Caco-2 (cell line): ENCODE measurements at regions of chr9 and their contacts with region 1.

Region 1: GRCh38 chr9:124852829-124853531 is at the start of gene WDR38:
- DNase-seq: peak; percentile 83 to 85
- H3K4me3 ChIP-seq: peak within 1 kb of the TSS; percentile 47
- H3K4me3 Mint-ChIP-seq: peak within 1 kb of the TSS; percentile 75
- H3K27ac Mint-ChIP-seq: peak within 1 kb of the TSS; percentile 76
- H3K4me1 ChIP-seq: peaks cover 7% of the 10 kb centered on the region; the same call in 1 of the 2 replicates
- H3K4me1 Mint-ChIP-seq: peaks cover 6% of the 10 kb centered on the region
- H3K27me3 ChIP-seq: no peaks in the 10 kb centered on the region
- H3K27me3 Mint-ChIP-seq: no peaks in the 10 kb centered on the region
- CTCF ChIP-seq: peak; percentile 78 to 99
- total RNA-seq, gene WDR38: not detected in 2 replicates

Region 2: GRCh38 chr9:124708633-124709291 is 144.2 kb before region 1 on chr9:
- CTCF ChIA-PET with region 1: interaction called, 5 read pairs
- POLR2A ChIA-PET with region 1: no interaction called
- intact Hi-C with region 1: loop called (anchors 1 kb)
- DNase-seq: peak in 1 of 2 experiments; percentile 48
- H3K4me3 ChIP-seq: no peak overlapping the region
- H3K4me3 Mint-ChIP-seq: no peak overlapping the region
- H3K27ac Mint-ChIP-seq: no peak overlapping the region
- H3K4me1 ChIP-seq: peaks cover 14% of the 10 kb centered on the region; the same call in 1 of the 2 replicates
- H3K4me1 Mint-ChIP-seq: peaks cover 41% of the 10 kb centered on the region
- H3K27me3 ChIP-seq: no peaks in the 10 kb centered on the region
- H3K27me3 Mint-ChIP-seq: no peaks in the 10 kb centered on the region
- CTCF ChIP-seq: no peak

Region 3: DNA sequence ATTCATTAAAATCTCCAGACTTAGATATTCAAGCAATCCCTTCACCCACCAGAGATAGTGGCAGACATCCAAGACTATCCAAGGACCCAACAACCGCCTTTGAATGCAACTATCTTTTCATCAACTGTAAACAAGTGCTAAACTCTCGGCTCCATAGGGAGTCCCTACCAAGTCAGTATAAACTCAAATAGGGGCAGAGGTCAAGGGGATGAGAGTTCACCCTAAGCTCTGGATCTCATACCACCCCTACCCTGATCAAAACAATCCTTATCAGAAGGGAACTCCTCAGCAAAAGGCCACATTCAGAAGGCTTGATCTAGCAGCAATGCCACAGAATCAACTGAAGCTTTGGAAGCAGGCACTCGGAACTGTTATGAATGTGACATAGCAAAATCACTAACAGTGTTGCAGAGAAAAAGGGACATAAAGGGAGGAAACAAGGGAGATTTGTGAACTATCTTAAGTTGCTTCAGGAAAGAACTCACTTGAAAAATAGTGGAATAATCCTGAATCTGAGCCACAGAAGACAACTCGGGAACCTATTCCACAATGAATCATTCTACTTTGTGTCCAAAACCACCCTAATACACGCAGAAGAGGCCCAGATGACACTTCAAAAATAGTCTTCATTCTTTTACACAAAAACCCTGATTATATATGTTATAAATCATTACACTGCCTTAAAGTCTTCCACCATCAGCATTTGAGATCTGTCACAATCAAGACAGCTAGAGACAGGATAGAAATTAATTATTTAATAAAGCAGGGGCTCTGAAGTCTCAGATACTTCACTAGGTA is 131.7 kb before region 1 on chr9:
- CTCF ChIA-PET with region 1: no interaction called
- POLR2A ChIA-PET with region 1: no interaction called
- intact Hi-C with region 1: no loop called
- DNase-seq: no peak
- H3K4me3 ChIP-seq: no peak overlapping the region
- H3K4me3 Mint-ChIP-seq: no peak overlapping the region
- H3K27ac Mint-ChIP-seq: no peak overlapping the region
- H3K4me1 ChIP-seq: peaks cover 37% of the 10 kb centered on the region
- H3K4me1 Mint-ChIP-seq: peaks cover 31% of the 10 kb centered on the region
- H3K27me3 ChIP-seq: no peaks in the 10 kb centered on the region
- H3K27me3 Mint-ChIP-seq: no peaks in the 10 kb centered on the region
- CTCF ChIP-seq: no peak

Region 4: DNA sequence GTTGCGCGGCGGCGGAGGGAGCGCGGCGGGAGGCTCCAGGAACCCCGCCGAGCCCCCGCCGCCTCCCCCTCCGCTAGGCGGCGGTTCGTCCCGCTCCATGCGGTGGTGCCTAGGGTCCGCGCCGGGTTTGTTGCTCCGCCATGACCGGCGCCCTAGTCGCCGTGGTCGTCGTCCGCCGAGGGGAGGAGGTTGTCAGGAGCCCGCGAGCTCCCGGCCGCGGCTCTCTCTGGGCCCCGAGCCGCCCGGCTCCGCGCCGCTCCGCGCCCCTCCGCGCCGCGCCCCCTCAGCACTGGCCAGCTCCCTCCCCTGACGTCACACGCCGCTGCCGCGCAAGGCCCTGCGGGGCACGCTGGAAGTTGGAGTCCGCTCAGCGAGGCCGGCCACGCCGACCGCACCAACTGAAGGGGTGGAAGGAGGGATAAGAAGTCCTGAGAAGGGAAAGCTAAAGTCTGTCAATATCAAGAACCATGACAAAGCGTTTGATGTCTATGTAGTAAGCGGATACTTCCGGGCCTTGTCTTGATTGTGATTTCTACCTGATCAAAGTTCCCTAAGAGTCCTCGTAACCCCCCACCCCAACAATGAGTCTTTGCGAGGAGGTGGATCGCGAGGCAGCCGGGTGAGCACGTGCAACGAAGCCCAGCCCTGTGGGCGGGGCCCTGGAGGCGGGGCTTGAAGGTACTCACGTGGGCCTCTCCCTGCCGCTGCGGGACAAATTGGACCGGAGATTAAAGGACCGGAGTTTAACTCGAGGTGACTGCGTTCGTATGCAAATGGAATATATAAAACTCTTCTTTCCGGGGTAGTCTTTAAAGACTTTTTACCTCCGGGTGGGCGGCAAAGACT is 81.7 kb before region 1 on chr9 and contains the start of gene NR6A1:
- CTCF ChIA-PET with region 1: interaction called, 325 read pairs
- POLR2A ChIA-PET with region 1: interaction called, 3 read pairs
- intact Hi-C with region 1: loop called (anchors 1 kb)
- DNase-seq: peak; percentile 98
- H3K4me3 ChIP-seq: peak within 1 kb of the TSS; percentile 98
- H3K4me3 Mint-ChIP-seq: peak within 1 kb of the TSS; percentile 100
- H3K27ac Mint-ChIP-seq: peak within 1 kb of the TSS; percentile 98
- H3K4me1 ChIP-seq: no peaks in the 10 kb centered on the region
- H3K4me1 Mint-ChIP-seq: peaks cover 18% of the 10 kb centered on the region
- H3K27me3 ChIP-seq: no peaks in the 10 kb centered on the region
- H3K27me3 Mint-ChIP-seq: no peaks in the 10 kb centered on the region
- CTCF ChIP-seq: peak; percentile 32 to 46
- total RNA-seq, gene NR6A1: 30.6 and 33.6 TPM in 2 replicates

Region 5: GRCh38 chr9:124794902-124795491 is 58.0 kb before region 1 on chr9:
- CTCF ChIA-PET with region 1: interaction called, 36 read pairs
- POLR2A ChIA-PET with region 1: no interaction called
- intact Hi-C with region 1: loop called (anchors 1 kb)
- DNase-seq: peak; percentile 62 to 75
- H3K4me3 ChIP-seq: no peak overlapping the region
- H3K4me3 Mint-ChIP-seq: no peak overlapping the region
- H3K27ac Mint-ChIP-seq: no peak overlapping the region
- H3K4me1 ChIP-seq: peaks cover 5% of the 10 kb centered on the region
- H3K4me1 Mint-ChIP-seq: no peaks in the 10 kb centered on the region
- H3K27me3 ChIP-seq: no peaks in the 10 kb centered on the region
- H3K27me3 Mint-ChIP-seq: no peaks in the 10 kb centered on the region
- CTCF ChIP-seq: peak; percentile 46 to 50

Region 6: DNA sequence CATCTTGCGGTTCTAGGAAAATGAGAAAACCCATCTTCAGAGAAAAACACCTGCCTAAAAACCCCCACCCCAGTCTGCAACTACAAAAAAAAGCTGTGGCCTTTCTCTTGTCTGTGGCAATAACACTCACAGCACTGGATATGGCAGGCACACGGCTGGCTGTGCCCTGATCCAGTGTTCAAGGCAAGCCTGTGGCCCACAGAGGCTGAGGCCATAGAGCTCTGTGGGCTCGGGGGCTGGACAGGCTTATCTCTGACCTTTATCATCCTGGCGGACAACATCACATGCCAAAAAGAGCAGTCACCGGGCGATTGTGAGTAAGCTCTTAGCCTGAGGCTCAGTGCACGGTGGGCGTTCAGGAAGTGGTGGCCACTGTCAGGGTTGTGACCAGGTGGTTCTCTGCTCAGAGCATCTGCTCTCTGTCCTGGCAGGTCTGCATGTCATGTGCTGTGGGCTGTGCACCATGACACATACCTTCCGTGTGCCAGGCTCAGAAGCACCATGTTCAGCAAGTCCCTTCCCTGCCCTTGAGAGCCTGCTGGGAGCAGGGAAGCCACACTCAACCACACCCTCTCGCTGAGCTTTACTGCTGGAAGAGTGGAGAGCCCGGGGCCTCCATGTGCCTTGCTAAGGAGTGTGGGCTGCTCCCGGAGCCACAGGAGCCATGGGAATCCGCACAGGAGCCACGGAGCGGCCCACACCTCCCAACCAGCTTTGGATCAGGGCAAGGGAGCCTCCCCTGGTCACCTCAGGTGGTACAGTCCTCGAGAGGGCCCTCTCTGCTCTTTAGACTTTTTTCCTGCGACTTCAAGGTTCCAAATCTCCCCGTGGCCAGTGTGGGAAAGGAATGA is 34.3 kb before region 1 on chr9:
- CTCF ChIA-PET with region 1: interaction called, 23 read pairs
- POLR2A ChIA-PET with region 1: no interaction called
- intact Hi-C with region 1: loop called (anchors 2 kb)
- DNase-seq: peak; percentile 82 to 92
- H3K4me3 ChIP-seq: no peak overlapping the region
- H3K4me3 Mint-ChIP-seq: peak overlapping the region; percentile 25
- H3K27ac Mint-ChIP-seq: peak overlapping the region; percentile 82
- H3K4me1 ChIP-seq: peaks cover 18% of the 10 kb centered on the region
- H3K4me1 Mint-ChIP-seq: peaks cover 8% of the 10 kb centered on the region
- H3K27me3 ChIP-seq: no peaks in the 10 kb centered on the region
- H3K27me3 Mint-ChIP-seq: no peaks in the 10 kb centered on the region
- CTCF ChIP-seq: no peak

Region 7: DNA sequence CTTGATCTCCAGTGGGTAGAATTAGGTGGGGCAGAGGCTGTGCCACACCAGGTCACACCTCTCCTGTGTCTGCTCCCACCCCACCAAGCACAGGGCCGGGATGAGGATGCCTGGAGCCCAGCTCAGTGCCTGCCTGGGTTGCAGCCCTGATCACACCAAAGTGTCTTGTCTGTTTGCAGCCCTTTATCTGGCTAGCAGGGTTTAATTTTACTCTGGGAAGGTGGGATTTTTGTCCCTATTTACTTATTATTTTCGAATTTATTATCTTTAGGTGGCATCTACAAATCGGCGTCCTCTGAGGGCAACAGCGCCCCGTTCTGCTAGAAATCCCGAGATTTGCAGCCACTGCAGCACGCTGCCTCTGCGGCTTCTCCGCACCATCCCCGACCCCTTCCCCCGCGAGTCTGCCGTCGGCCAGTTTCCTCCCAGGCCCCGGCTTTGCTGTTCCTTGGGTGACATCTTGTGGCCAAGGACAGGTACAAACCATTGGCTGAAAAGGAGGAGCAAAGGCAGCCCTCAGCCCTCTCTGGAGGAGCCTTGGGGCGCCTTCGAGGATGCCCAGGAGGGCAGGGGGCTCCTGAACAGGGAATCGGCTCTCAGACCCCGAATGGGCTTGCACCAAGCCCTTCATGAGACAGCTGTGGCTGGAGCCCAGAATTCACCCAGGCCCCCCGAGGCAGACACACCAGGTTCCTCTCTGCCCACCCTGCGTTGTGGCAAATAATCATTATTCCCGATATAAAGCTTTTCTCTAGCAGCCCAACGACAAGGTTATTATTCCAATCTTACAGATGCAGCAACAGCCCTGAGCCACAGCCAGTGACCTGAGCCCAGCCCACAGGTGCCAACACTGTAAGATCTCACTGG is 521.7 kb after region 1 on chr9:
- CTCF ChIA-PET with region 1: no interaction called
- POLR2A ChIA-PET with region 1: no interaction called
- intact Hi-C with region 1: loop called (anchors 2 kb)
- DNase-seq: peak; percentile 81
- H3K4me3 ChIP-seq: peak overlapping the region; percentile 21
- H3K4me3 Mint-ChIP-seq: peak overlapping the region; percentile 67
- H3K27ac Mint-ChIP-seq: peak overlapping the region; percentile 44
- H3K4me1 ChIP-seq: no peaks in the 10 kb centered on the region
- H3K4me1 Mint-ChIP-seq: peaks cover 13% of the 10 kb centered on the region
- H3K27me3 ChIP-seq: no peaks in the 10 kb centered on the region
- H3K27me3 Mint-ChIP-seq: no peaks in the 10 kb centered on the region
- CTCF ChIP-seq: peak; percentile 80 to 88